OCI-LY7 (cell line): ENCODE measurements at regions of chr2 and their contacts with region 1.

Region 1: GRCh38 chr2:65064728-65065552 is 8.7 kb downstream of the CEP68 start:
- DNase-seq: peak; percentile 88
- H3K4me3 ChIP-seq: peak overlapping the region; percentile 43
- H3K27ac ChIP-seq: peak overlapping the region; percentile 67
- H3K4me1 ChIP-seq: peaks cover 46% of the 10 kb centered on the region
- CTCF ChIP-seq: peak; percentile 89

Region 2: DNA sequence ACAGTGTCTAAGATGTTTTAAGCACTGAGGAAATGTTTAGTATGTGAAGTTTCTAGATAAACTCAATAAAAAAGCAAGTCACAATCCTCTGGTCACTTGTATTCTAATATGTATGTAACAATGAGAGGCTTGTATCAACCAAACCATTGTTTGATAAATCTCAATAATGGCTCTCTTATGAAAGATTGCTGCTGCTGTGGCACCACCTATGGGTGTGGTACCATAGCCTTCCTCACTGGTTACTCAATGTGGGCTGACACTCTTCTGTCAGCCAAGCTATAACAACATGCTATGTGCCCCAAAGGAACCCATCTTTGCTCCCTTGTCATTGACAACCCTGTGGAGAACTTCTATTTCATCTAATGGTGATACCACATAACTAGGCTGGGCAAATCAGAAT is 77.6 kb after region 1 on chr2:
- CTCF ChIA-PET with region 1: no interaction called
- POLR2A ChIA-PET with region 1: interaction called, 6 read pairs
- intact Hi-C with region 1: loop called (anchors 1 kb)
- DNase-seq: peak; percentile 41
- H3K4me3 ChIP-seq: no peak overlapping the region
- H3K27ac ChIP-seq: no peak overlapping the region
- H3K4me1 ChIP-seq: no peaks in the 10 kb centered on the region
- CTCF ChIP-seq: peak; percentile 74